ENCODE measurements at regions of chr9 and their contacts with region 1.

Region 1: GRCh38 chr9:70868661-70869652 is 252.5 kb downstream of the TRPM3 start:
- DNase-seq: no peak
- H3K4me3 ChIP-seq: peak overlapping the region in 2 of 4 donors; percentile 3 to 25
- H3K27ac ChIP-seq: no peak overlapping the region
- H3K4me1 ChIP-seq: no peaks in the 10 kb centered on the region
- H3K27me3 ChIP-seq: peaks cover 3% of the 10 kb centered on the region
- CTCF ChIP-seq: no peak
- EP300 ChIP-seq: no peak
- POLR2A ChIP-seq: no peak

Region 2: GRCh38 chr9:70954126-70954525 is 85.2 kb after region 1 on chr9:
- in situ Hi-C with region 1: loop called in 1 of 4 experiments (anchors 25 kb)
- intact Hi-C with region 1: no loop called
- DNase-seq: no peak
- H3K4me3 ChIP-seq: no peak overlapping the region
- H3K27ac ChIP-seq: no peak overlapping the region
- H3K4me1 ChIP-seq: no peaks in the 10 kb centered on the region
- H3K27me3 ChIP-seq: no peaks in the 10 kb centered on the region
- CTCF ChIP-seq: no peak
- EP300 ChIP-seq: no peak
- POLR2A ChIP-seq: no peak

Measured in transverse colon (tissue), 4 donors.